ENCODE measurements at regions of chr1 and their contacts with region 1.

Region 1: GRCh38 chr1:54488779-54489626 is 59.0 kb upstream of the ACOT11 start:
- DNase-seq: peak; percentile 76
- H3K4me3 Mint-ChIP-seq: peak overlapping the region; percentile 81
- H3K27ac Mint-ChIP-seq: peak overlapping the region; percentile 47
- H3K4me1 Mint-ChIP-seq: peaks cover 27% of the 10 kb centered on the region
- H3K27me3 Mint-ChIP-seq: peaks cover 6% of the 10 kb centered on the region

Region 2: DNA sequence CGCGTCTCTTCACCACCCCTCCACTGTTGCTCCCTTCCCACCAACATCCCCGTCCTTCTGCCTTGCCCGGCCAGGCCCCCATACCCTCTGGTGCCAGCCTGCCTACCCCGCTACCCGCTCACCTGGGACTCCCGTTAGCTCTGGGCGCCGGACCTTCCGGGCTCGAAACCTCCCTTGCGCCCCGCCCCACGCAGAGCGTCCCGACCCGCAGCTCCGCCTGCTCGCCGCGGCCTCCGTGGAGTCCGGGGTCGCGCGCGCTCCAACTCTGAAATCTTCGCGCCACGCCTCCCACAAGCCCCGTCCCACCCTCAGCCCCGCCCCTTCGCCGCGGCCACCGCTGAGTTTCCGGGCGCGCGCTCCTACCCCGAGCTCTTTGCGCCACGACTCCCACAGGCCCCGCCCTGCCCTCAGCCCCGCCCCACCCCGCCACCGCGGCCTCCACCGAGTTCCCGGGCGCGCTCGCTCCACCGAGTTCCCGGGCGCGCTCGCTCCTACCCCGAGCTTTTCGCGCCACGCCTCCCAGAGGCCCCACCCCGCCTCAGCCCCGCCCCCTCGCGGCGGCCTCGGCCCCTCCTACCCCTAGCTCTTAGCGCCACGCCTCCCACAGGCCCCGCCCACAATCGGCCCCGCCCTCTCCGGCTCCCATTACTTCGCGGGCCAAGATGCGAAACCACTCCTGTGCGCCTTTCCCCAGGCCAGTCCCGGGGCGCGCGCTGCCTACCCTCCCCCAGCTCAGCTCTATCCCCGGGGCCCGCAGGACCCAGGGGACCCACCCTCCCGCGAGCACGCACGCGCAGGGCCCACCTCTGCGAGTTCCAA is 543.4 kb before region 1 on chr1 and contains the start of gene IFT25:
- CTCF ChIA-PET with region 1: no interaction called
- POLR2A ChIA-PET with region 1: no interaction called
- intact Hi-C with region 1: no loop called
- DNase-seq: peak; percentile 99
- H3K4me3 Mint-ChIP-seq: peak within 1 kb of the TSS; percentile 92
- H3K27ac Mint-ChIP-seq: peak within 1 kb of the TSS; percentile 90
- H3K4me1 Mint-ChIP-seq: peaks cover 48% of the 10 kb centered on the region
- H3K27me3 Mint-ChIP-seq: no peaks in the 10 kb centered on the region
- total RNA-seq, gene IFT25: 52.5 to 60.3 TPM

Region 3: DNA sequence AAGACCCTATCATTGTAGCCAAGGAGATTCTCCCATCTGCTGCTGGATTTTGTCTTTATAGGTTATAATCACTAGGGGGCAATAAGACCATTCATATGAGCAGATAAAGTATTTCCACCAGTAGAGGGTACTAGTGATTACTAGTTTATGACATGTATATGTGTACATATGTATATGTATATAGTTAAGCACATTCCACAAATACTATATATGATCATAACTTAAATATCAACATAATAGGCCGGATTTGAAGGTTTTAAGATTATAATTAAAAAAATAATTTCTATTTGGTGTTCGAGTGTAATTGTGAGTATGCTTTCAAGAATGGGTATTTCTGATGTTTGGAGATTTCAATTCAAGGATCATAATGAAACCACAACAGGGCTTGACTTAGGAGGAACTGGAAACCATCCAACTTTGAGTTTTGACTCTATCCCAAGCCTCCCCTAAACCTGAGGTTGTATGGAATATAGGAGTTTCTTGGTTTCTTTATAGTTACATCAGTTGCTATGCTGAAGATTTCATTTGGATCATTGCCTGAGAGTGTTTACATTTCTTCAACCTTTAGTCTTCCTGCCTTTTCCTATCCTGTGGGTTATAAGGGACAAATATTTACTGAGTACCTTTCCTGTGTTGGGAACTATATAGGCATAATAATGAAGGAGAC is 418.7 kb before region 1 on chr1:
- CTCF ChIA-PET with region 1: interaction called, 7 read pairs
- POLR2A ChIA-PET with region 1: no interaction called
- intact Hi-C with region 1: loop called (anchors 2 kb)
- DNase-seq: no peak
- H3K4me3 Mint-ChIP-seq: no peak overlapping the region
- H3K27ac Mint-ChIP-seq: no peak overlapping the region
- H3K4me1 Mint-ChIP-seq: no peaks in the 10 kb centered on the region
- H3K27me3 Mint-ChIP-seq: no peaks in the 10 kb centered on the region

Region 4: DNA sequence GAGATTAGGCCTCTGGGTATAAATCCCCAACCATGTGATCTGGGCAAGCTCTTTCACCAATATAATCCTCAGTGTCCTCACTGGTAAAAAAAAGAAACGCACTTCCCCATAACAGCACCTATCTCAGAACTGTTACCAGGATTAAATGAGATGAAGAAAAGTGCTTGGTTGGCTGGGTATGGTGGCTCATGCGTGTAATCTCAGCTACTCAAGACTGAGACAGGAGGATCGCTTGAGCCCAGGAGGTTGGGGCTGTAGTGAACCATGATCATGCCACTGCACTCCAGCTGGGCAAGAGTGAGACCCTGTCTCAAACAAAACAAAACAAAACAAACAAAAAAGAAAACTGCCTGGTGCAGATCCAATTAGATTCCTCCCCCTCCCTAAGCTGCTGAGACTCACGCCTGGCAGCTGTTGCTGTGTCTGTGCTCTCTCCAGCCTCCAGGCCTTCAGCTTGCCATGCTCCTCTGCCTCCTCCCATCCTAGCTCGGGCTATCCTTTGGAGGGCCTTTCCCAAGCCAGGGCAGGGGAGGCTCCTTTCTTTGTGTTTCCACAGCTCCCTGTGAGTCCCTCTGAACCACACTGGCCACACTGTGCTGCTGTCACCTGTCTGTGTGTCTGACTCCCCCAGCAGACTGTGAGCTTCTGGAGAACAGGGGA is 308.2 kb before region 1 on chr1:
- CTCF ChIA-PET with region 1: interaction called, 57 read pairs
- POLR2A ChIA-PET with region 1: no interaction called
- intact Hi-C with region 1: loop called (anchors 2 kb)
- DNase-seq: no peak
- H3K4me3 Mint-ChIP-seq: no peak overlapping the region
- H3K27ac Mint-ChIP-seq: no peak overlapping the region
- H3K4me1 Mint-ChIP-seq: no peaks in the 10 kb centered on the region
- H3K27me3 Mint-ChIP-seq: no peaks in the 10 kb centered on the region

Region 5: GRCh38 chr1:54229281-54229891 is 259.6 kb before region 1 on chr1:
- CTCF ChIA-PET with region 1: interaction called, 6 read pairs
- POLR2A ChIA-PET with region 1: interaction called, 3 read pairs
- intact Hi-C with region 1: loop called (anchors 5 kb)
- DNase-seq: peak; percentile 62
- H3K4me3 Mint-ChIP-seq: no peak overlapping the region
- H3K27ac Mint-ChIP-seq: peak overlapping the region; percentile 11
- H3K4me1 Mint-ChIP-seq: peaks cover 39% of the 10 kb centered on the region
- H3K27me3 Mint-ChIP-seq: no peaks in the 10 kb centered on the region

Region 6: GRCh38 chr1:54249819-54250435 is 239.1 kb before region 1 on chr1:
- CTCF ChIA-PET with region 1: no interaction called
- POLR2A ChIA-PET with region 1: no interaction called
- intact Hi-C with region 1: no loop called
- DNase-seq: no peak
- H3K4me3 Mint-ChIP-seq: no peak overlapping the region
- H3K27ac Mint-ChIP-seq: no peak overlapping the region
- H3K4me1 Mint-ChIP-seq: no peaks in the 10 kb centered on the region
- H3K27me3 Mint-ChIP-seq: no peaks in the 10 kb centered on the region

Region 7: DNA sequence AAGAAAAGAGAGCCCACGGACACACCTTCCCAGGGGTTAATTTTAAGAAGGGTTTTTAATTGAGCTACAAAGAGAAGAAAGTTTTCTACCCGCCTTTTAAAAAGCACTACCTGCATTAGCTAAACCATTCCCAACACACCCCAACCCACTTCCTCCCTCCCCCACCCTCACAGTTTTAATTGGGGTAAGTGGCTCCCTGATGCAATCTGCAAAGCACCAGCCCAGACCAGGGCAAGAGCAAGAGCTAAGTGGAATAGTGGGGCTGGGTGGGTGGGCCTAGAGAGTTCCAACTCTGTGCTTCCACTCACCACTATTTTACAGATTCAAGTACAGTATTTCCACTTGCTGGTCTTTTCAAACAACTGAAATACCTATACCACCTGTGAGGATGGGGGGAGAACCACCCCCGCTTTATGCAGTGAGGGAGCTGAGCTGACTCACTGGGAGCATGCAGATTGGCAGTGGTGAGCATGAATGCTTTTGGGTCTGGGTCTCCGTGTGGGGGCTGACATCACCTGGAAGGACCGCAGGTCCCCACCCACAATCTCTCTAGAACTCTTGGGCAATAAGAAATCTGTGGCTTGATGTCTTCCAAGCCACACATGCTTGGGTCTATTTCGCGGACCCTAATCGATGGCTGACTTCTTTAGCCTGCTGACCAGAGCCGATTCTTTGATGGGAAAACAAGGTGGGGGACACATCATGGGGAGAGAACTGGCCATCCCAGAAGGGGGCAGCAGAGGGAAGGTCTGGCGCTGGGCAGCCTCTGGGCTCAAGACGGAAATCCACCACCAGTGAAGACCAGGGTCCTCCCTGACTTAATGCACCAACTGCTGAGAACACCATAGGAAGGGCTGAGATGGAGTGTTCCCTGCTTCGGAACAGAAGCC is 178.3 kb before region 1 on chr1:
- CTCF ChIA-PET with region 1: interaction called, 11 read pairs
- POLR2A ChIA-PET with region 1: no interaction called
- intact Hi-C with region 1: loop called (anchors 1 kb)
- DNase-seq: peak; percentile 35
- H3K4me3 Mint-ChIP-seq: no peak overlapping the region
- H3K27ac Mint-ChIP-seq: no peak overlapping the region
- H3K4me1 Mint-ChIP-seq: peaks cover 44% of the 10 kb centered on the region
- H3K27me3 Mint-ChIP-seq: no peaks in the 10 kb centered on the region

Region 8: DNA sequence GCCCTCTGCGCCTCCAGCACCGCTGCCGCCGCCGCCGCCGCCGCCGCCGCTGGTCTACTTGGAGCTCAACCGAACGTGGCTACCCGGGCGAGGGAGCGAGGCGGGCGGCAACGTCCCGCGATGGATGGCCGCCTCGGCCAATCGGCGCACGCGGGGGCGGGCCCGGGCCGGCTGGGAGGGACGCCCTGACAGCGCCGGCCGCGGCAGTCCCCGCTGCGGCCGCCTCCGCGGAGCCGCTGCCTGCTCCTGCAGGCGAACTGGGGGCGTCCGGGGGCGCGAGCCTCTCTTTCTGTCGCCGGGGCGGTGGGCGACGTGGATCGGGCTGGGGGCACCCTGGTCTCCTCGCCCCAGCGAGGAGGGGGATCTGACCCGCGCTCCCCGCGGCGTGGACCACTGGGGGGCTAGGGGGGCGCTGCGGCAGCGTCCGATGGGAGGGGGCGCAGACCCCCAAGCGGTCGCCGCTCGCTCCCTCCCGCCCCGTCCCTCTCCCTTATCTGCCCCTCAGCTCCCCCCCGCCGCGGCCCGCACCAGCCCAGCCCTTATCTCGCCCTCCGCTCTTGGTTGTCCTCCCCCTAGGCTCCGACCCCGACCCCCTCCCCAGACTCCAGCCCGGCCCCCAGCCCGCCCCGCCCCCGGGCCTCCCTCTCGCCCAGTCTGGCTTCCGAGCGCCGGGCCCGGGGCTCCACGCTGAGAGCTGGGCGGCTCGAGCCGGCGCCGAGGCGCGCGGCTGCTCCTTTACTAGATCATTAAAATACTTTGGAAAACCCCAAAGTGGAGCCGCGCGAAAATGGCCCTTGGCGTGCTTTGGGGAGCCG is 82.5 kb before region 1 on chr1 and contains the start of gene SSBP3:
- CTCF ChIA-PET with region 1: interaction called, 26 read pairs
- POLR2A ChIA-PET with region 1: interaction called, 22 read pairs
- intact Hi-C with region 1: loop called (anchors 1 kb)
- DNase-seq: peak; percentile 93
- H3K4me3 Mint-ChIP-seq: peak within 1 kb of the TSS; percentile 84
- H3K27ac Mint-ChIP-seq: peak within 1 kb of the TSS; percentile 92
- H3K4me1 Mint-ChIP-seq: peaks cover 63% of the 10 kb centered on the region
- H3K27me3 Mint-ChIP-seq: no peaks in the 10 kb centered on the region
- total RNA-seq, gene SSBP3: 44.4 to 49.6 TPM

Measured in activated CD4-positive, alpha-beta memory T cell treated with anti-CD3 and anti-CD28 coated beads for 36 hours (primary cell).